CD4-positive, alpha-beta memory T cell (primary cell): ENCODE measurements at regions of chr1 and their contacts with region 1.

Region 1: DNA sequence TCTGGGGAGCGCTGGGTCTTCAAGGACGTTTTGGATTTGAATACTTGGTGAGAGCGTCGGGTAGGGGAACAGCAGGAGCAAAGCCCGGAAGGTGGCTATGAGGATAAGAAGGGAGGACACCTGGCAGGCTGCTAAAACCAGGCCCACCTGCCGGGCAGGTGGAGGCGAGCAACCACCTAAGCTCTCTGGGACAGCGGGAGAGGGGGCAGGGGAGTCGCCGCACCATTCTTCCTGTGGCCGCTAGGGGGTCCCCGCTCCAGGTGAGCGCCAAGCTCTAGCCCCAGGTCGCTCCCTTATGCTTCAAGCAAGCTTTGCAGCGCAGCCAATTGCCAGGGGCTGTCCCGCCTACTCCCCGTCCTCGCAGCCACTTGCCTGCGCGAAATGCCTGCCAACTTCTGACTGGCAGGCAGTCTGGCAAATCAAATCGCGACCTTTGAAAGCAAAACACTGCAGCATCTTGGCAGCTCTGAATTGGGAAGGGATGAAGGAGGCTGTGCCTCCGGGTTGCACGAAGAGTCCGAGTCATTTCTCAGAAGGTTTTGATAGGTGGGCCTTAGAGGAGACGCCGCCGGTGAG is at the start of gene NIPAL3:
- DNase-seq: peak; percentile 95 to 99 (median 98)
- H3K4me3 ChIP-seq: peak within 1 kb of the TSS; percentile 80 to 94
- H3K4me3 Mint-ChIP-seq: peak within 1 kb of the TSS; percentile 95 to 100 (median 98)
- H3K27ac ChIP-seq: peak within 1 kb of the TSS; percentile 67
- H3K27ac Mint-ChIP-seq: peak within 1 kb of the TSS; percentile 87 to 97 (median 95)
- H3K4me1 ChIP-seq: peaks cover 54% of the 10 kb centered on the region
- H3K4me1 Mint-ChIP-seq: peaks cover 37 to 76% (median 54%) of the 10 kb centered on the region in 4 donors
- H3K27me3 ChIP-seq: no peaks in the 10 kb centered on the region
- H3K27me3 Mint-ChIP-seq: no peaks in the 10 kb centered on the region
- total RNA-seq, gene NIPAL3: 52.8 to 53.2 TPM

Region 2: DNA sequence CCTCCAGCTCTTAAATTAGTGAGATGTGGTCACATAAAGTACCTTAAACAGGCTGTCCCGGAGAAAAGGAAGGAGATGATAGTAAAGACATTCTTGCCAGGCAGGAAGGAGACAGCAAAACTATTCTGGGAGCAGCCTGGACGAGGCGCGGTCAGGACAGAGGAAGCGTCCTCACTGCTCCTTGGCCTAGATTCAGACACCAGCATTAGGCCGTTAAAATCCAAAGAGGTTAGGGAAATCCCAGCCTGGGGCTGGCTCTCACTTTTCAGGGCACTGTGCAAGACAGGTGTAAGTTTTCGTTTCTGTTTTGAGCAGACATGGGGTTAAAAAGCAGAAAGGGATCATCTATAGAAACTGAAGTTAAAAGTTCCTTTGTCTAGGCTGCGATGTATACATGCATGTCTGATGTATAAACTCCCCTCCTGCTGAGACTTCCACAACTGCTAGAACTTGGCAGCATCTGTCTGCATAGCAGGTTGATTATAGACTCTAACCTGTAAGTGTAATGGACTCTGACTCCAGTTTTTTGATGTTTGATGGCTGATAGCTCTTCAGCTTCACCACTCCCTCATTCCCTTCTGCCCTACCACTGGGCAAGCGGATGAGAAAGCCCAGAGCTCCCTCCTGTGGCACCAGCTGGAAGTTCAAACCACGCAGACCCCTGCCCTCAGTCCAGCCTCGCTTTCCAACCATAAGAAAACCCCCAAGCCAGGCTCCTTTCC is 23.4 kb before region 1 on chr1:
- CTCF ChIA-PET with region 1: interaction called, 100 read pairs
- POLR2A ChIA-PET with region 1: interaction called, 32 read pairs
- intact Hi-C with region 1: loop called (anchors 1 kb)
- DNase-seq: peak; percentile 62 to 75 (median 69)
- H3K4me3 ChIP-seq: peak overlapping the region in 1 of 2 donors; percentile 17
- H3K4me3 Mint-ChIP-seq: peak overlapping the region; percentile 81 to 92 (median 86)
- H3K27ac ChIP-seq: peak overlapping the region; percentile 72
- H3K27ac Mint-ChIP-seq: peak overlapping the region; percentile 94 to 99 (median 98)
- H3K4me1 ChIP-seq: peaks cover 33% of the 10 kb centered on the region
- H3K4me1 Mint-ChIP-seq: peaks cover 23 to 29% (median 26%) of the 10 kb centered on the region in 4 donors
- H3K27me3 ChIP-seq: no peaks in the 10 kb centered on the region
- H3K27me3 Mint-ChIP-seq: no peaks in the 10 kb centered on the region

Region 3: DNA sequence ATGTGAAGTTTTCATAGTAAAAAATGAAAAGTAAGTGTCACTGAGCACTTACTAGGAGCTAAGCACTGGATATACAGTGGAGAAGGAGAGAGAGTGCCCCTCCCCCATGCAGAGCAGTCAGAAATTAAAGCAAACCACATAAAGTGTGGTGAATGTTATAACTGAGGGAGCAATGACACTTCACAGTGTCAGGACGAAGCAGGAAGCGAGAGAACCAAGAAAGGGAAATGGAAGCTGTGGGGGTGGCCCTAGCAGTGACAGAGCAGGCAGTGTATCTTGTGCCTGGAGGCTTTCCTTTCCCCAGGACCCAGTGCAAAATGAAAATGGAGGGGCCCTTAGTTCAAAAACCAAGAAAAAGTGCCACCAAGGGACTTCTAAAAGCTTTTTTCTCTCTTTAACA is 65.7 kb after region 1 on chr1:
- CTCF ChIA-PET with region 1: interaction called, 44 read pairs
- POLR2A ChIA-PET with region 1: interaction called, 40 read pairs
- intact Hi-C with region 1: loop called (anchors 1 kb)
- DNase-seq: peak; percentile 59 to 77 (median 67)
- H3K4me3 ChIP-seq: peak overlapping the region in 1 of 2 donors; percentile 50
- H3K4me3 Mint-ChIP-seq: peak overlapping the region; percentile 66 to 96 (median 86)
- H3K27ac ChIP-seq: peak overlapping the region; percentile 61
- H3K27ac Mint-ChIP-seq: peak overlapping the region; percentile 96 to 99 (median 99)
- H3K4me1 ChIP-seq: peaks cover 62% of the 10 kb centered on the region
- H3K4me1 Mint-ChIP-seq: peaks cover 42 to 72% (median 57%) of the 10 kb centered on the region in 4 donors
- H3K27me3 ChIP-seq: no peaks in the 10 kb centered on the region
- H3K27me3 Mint-ChIP-seq: no peaks in the 10 kb centered on the region

Region 4: DNA sequence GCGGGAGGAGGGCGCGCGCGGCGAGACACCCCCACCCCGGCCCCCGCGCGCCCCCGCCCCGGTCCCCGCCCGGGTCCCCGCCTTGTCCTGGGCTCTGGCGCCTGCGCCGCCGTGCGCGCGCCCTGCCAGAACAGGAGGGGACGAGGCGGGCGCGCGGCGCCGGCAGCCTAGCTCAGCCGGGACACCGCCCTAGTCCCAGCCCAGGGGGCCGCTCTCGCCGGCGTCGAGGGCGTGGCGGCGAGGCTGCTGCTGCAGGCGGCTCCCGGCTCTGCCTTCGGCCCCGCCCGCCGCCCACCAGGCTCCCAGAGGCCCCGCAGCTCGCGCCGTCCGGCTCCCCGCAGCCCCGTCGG is 87.3 kb after region 1 on chr1 and contains the start of gene RCAN3:
- CTCF ChIA-PET with region 1: interaction called, 32 read pairs
- POLR2A ChIA-PET with region 1: interaction called, 164 read pairs
- intact Hi-C with region 1: loop called (anchors 1 kb)
- DNase-seq: peak; percentile 89 to 93 (median 90)
- H3K4me3 ChIP-seq: peak within 1 kb of the TSS; percentile 83 to 84
- H3K4me3 Mint-ChIP-seq: peak within 1 kb of the TSS; percentile 96 to 100 (median 99)
- H3K27ac ChIP-seq: peak within 1 kb of the TSS; percentile 93
- H3K27ac Mint-ChIP-seq: peak within 1 kb of the TSS; percentile 92 to 99 (median 98)
- H3K4me1 ChIP-seq: peaks cover 67% of the 10 kb centered on the region
- H3K4me1 Mint-ChIP-seq: peaks cover 43 to 83% (median 57%) of the 10 kb centered on the region in 4 donors
- H3K27me3 ChIP-seq: no peaks in the 10 kb centered on the region
- H3K27me3 Mint-ChIP-seq: no peaks in the 10 kb centered on the region
- total RNA-seq, gene RCAN3: 171 to 178 TPM

Region 5: GRCh38 chr1:24526940-24527542 is 111.6 kb after region 1 on chr1:
- CTCF ChIA-PET with region 1: interaction called, 122 read pairs
- POLR2A ChIA-PET with region 1: interaction called, 26 read pairs
- intact Hi-C with region 1: loop called (anchors 1 kb)
- DNase-seq: peak; percentile 47 to 59 (median 53)
- H3K4me3 ChIP-seq: no peak overlapping the region
- H3K4me3 Mint-ChIP-seq: peak overlapping the region in 3 of 8 donors; percentile 36 to 58 (median 52)
- H3K27ac ChIP-seq: peak overlapping the region; percentile 31
- H3K27ac Mint-ChIP-seq: peak overlapping the region; percentile 65 to 94 (median 87)
- H3K4me1 ChIP-seq: peaks cover 71% of the 10 kb centered on the region
- H3K4me1 Mint-ChIP-seq: peaks cover 46 to 82% (median 63%) of the 10 kb centered on the region in 4 donors
- H3K27me3 ChIP-seq: no peaks in the 10 kb centered on the region
- H3K27me3 Mint-ChIP-seq: no peaks in the 10 kb centered on the region

Region 6: GRCh38 chr1:24541711-24542346 is 126.4 kb after region 1 on chr1:
- CTCF ChIA-PET with region 1: interaction called, 21 read pairs
- POLR2A ChIA-PET with region 1: interaction called, 22 read pairs
- intact Hi-C with region 1: no loop called
- DNase-seq: no peak
- H3K4me3 ChIP-seq: no peak overlapping the region
- H3K4me3 Mint-ChIP-seq: peak overlapping the region in 1 of 8 donors; percentile 29
- H3K27ac ChIP-seq: no peak overlapping the region
- H3K27ac Mint-ChIP-seq: peak overlapping the region; percentile 53 to 83 (median 71)
- H3K4me1 ChIP-seq: peaks cover 62% of the 10 kb centered on the region
- H3K4me1 Mint-ChIP-seq: peaks cover 46 to 71% (median 57%) of the 10 kb centered on the region in 4 donors
- H3K27me3 ChIP-seq: no peaks in the 10 kb centered on the region
- H3K27me3 Mint-ChIP-seq: no peaks in the 10 kb centered on the region

Region 7: DNA sequence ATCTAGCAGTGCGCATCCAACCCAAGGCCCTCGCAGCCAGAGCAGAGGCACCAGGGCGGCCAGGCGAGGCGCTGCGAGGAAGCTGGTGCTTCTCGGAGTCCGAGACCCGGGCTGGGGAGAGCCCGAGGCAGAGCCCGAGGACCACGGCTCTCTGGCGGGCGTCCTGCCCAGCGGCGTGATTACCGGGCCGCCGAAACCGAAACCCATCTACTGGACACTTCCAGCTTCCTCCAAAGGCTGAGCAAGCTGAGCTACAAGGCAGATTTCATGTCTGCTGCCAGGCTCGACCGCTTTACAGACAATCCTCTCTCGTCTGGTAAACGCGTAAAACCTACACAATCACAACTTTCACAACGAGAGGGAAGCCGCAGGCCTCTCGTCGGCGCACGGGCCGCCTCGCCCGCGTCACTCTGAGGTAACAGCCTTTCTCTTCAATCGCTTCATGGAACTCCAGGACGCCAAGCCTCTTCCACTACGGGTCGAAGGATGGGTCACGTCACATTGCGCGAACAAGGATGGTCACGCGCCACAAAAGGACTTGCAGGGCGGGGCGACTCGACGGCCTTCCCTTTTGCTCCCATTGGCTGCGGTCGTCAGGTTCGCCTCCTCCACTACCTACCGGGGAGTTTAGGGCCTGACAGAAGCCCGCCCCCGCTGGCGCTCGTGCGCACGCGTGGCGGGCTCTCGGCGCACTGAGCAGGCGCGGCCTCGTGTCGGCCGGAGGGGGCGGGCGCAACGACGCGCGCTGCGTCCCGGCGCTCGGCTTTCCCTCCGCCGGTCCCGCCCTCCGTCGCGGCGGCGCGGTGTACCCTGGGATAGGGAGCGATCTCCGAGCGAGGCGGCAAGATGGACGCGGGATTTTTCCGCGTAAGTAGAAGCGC is 227.3 kb after region 1 on chr1 and contains the start of gene SRRM1:
- CTCF ChIA-PET with region 1: interaction called, 11 read pairs
- POLR2A ChIA-PET with region 1: interaction called, 20 read pairs
- intact Hi-C with region 1: loop called (anchors 2 kb)
- DNase-seq: peak; percentile 98 to 100 (median 100)
- H3K4me3 ChIP-seq: peak within 1 kb of the TSS; percentile 47 to 98
- H3K4me3 Mint-ChIP-seq: peak within 1 kb of the TSS; percentile 94 to 98 (median 96)
- H3K27ac ChIP-seq: peak within 1 kb of the TSS; percentile 99
- H3K27ac Mint-ChIP-seq: peak within 1 kb of the TSS; percentile 97 to 100 (median 100)
- H3K4me1 ChIP-seq: peaks cover 32% of the 10 kb centered on the region
- H3K4me1 Mint-ChIP-seq: peaks cover 15 to 61% (median 42%) of the 10 kb centered on the region in 4 donors
- H3K27me3 ChIP-seq: no peaks in the 10 kb centered on the region
- H3K27me3 Mint-ChIP-seq: no peaks in the 10 kb centered on the region
- total RNA-seq, gene SRRM1: 209 to 230 TPM